Posterior vena cava (tissue), 2 donors: ENCODE measurements at regions of chr4 and their contacts with region 1.

Region 1: GRCh38 chr4:67684839-67685531 is 16.0 kb downstream of the UBA6 start:
- DNase-seq: no peak

Region 2: GRCh38 chr4:67659065-67659464 is 25.9 kb before region 1 on chr4:
- intact Hi-C with region 1: loop called in 1 of 2 experiments (anchors 1 kb)
- DNase-seq: no peak